ENCODE measurements at regions of chr3 and their contacts with region 1.

Region 1: DNA sequence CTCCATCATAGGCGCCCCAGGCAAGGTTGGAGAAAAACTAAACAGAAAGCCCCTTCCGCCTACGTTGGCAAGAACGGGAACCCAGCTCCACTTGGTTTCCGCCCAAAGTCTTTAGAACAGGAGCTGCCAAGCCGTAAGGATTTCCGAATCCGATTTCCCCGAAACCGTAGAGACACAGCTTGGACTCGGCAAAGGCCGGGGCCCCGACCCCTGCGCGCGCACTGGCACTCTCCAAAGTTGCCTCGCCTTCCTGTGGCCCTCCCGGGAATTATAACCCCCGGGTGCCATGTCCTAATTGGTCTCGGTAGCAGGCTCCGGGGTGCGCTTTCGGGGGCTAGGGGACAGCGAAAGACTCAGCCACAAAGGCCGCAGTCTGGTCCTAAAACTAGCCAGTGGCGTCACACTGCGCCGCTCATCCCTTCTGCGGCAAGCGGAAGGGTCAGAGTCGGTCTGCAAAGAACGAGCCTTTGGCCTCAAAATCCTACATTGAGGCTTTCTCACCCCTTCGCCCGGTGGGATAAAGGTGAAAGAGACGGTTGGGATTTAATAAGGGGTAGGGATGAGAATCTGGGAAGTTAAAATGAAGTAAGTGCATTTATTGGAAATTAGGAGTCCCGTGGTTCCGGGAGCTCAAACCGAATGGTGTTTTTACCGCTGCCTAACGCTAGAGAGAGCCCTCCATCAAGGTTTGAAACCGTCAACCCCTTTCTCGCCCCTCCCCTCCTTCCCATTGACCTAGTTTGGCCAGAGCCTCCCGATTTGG is 6.8 kb downstream of the BCL6 start:
- DNase-seq: peak; percentile 66 to 79 (median 79)
- H3K4me3 ChIP-seq: peak overlapping the region; percentile 68 to 96 (median 77)
- H3K4me3 Mint-ChIP-seq: peak overlapping the region; percentile 95 to 100
- H3K27ac ChIP-seq: peak overlapping the region; percentile 96 to 99
- H3K27ac Mint-ChIP-seq: peak overlapping the region; percentile 99 to 100 (median 100)
- H3K4me1 ChIP-seq: peaks cover 47 to 75% of the 10 kb centered on the region in 2 donors
- H3K4me1 Mint-ChIP-seq: peaks cover 45% of the 10 kb centered on the region
- H3K27me3 ChIP-seq: no peaks in the 10 kb centered on the region
- H3K27me3 Mint-ChIP-seq: peaks cover 0 to 9% (median 3%) of the 10 kb centered on the region in 3 donors
- CTCF ChIP-seq: peak; percentile 77

Region 2: GRCh38 chr3:187679638-187680396 is 58.7 kb before region 1 on chr3:
- intact Hi-C with region 1: no loop called
- DNase-seq: peak; percentile 36 to 57 (median 52)
- H3K4me3 ChIP-seq: no peak overlapping the region
- H3K4me3 Mint-ChIP-seq: no peak overlapping the region
- H3K27ac ChIP-seq: no peak overlapping the region
- H3K27ac Mint-ChIP-seq: no peak overlapping the region
- H3K4me1 ChIP-seq: no peaks in the 10 kb centered on the region
- H3K4me1 Mint-ChIP-seq: peaks cover 2% of the 10 kb centered on the region
- H3K27me3 ChIP-seq: peaks cover 0 to 9% of the 10 kb centered on the region in 2 donors
- H3K27me3 Mint-ChIP-seq: peaks cover 2 to 18% (median 11%) of the 10 kb centered on the region in 3 donors
- CTCF ChIP-seq: peak; percentile 94

Region 3: GRCh38 chr3:187689984-187690383 is 48.5 kb before region 1 on chr3:
- intact Hi-C with region 1: no loop called
- DNase-seq: no peak
- H3K4me3 ChIP-seq: no peak overlapping the region
- H3K4me3 Mint-ChIP-seq: no peak overlapping the region
- H3K27ac ChIP-seq: no peak overlapping the region
- H3K27ac Mint-ChIP-seq: no peak overlapping the region
- H3K4me1 ChIP-seq: no peaks in the 10 kb centered on the region
- H3K4me1 Mint-ChIP-seq: peaks cover 2% of the 10 kb centered on the region
- H3K27me3 ChIP-seq: peaks cover 2 to 7% of the 10 kb centered on the region in 2 donors
- H3K27me3 Mint-ChIP-seq: peaks cover 10 to 16% (median 14%) of the 10 kb centered on the region in 3 donors
- CTCF ChIP-seq: no peak

Region 4: DNA sequence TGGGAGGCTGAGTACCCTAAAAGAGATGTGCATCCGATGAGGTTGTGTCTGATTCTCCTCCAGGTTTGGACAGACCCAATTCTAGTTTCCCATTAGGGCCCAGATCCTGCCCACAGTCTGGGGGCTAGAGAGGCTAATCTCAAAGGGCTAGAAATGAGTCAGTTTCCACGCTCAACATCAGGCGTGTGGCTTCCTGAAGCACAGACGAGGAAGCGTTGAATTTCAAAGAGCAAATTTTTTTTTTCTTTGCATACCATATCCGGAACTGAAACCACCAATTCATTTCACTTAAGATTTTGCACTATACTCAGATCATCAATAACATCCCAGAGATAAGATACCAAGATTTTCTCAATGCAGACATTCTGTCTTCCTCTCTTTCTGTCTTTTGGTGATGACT is 180.5 kb after region 1 on chr3:
- intact Hi-C with region 1: loop called in 1 of 2 experiments (anchors 5 kb)
- DNase-seq: peak; percentile 73 to 91 (median 86)
- H3K4me3 ChIP-seq: peak overlapping the region in 2 of 3 experiments; percentile 25 to 69
- H3K4me3 Mint-ChIP-seq: peak overlapping the region; percentile 63 to 75
- H3K27ac ChIP-seq: peak overlapping the region; percentile 30 to 94
- H3K27ac Mint-ChIP-seq: peak overlapping the region; percentile 94 to 98 (median 95)
- H3K4me1 ChIP-seq: peaks cover 66 to 71% of the 10 kb centered on the region in 2 donors
- H3K4me1 Mint-ChIP-seq: peaks cover 73% of the 10 kb centered on the region
- H3K27me3 ChIP-seq: no peaks in the 10 kb centered on the region
- H3K27me3 Mint-ChIP-seq: no peaks in the 10 kb centered on the region
- CTCF ChIP-seq: no peak

Region 5: GRCh38 chr3:188185717-188186251 is 447.3 kb after region 1 on chr3:
- intact Hi-C with region 1: loop called in 1 of 2 experiments (anchors 2 kb)
- DNase-seq: peak in 2 of 3 donors; percentile 43 to 48
- H3K4me3 ChIP-seq: no peak overlapping the region
- H3K4me3 Mint-ChIP-seq: peak overlapping the region in 1 of 2 donors; percentile 16
- H3K27ac ChIP-seq: no peak overlapping the region
- H3K27ac Mint-ChIP-seq: peak overlapping the region; percentile 59 to 92 (median 83)
- H3K4me1 ChIP-seq: peaks cover 20 to 29% of the 10 kb centered on the region in 2 donors
- H3K4me1 Mint-ChIP-seq: peaks cover 26% of the 10 kb centered on the region
- H3K27me3 ChIP-seq: no peaks in the 10 kb centered on the region
- H3K27me3 Mint-ChIP-seq: peaks cover 1 to 7% (median 3%) of the 10 kb centered on the region in 3 donors
- CTCF ChIP-seq: no peak

Region 6: DNA sequence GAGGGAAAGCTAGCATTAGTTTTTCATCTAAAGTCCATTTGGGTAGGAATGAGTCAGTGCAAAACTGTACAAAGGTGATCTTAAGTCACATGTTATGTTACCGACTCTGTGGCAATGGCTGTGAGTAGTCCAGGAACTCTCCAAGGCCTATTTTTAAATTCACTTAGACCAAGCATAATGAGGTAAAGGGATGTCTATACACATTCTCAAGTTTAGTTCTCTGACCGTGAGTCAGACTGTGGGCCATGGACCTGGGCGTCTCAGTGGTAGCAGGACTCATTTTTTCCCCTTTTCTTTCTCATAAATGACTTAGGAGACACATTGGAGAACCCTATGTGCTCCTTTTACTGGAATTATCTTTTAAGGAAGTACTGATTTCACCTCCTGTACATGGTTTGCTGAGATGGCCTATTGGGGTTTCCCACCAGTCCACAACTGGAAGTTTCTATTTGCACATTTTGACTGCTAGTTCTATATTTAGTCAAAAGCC is 944.6 kb after region 1 on chr3:
- intact Hi-C with region 1: loop called in 1 of 2 experiments (anchors 2 kb)
- DNase-seq: peak; percentile 14 to 70 (median 49)
- H3K4me3 ChIP-seq: no peak overlapping the region
- H3K4me3 Mint-ChIP-seq: no peak overlapping the region
- H3K27ac ChIP-seq: peak overlapping the region in 1 of 2 donors; percentile 23
- H3K27ac Mint-ChIP-seq: peak overlapping the region in 3 of 7 donors; percentile 6 to 82 (median 62)
- H3K4me1 ChIP-seq: peaks cover 38 to 58% of the 10 kb centered on the region in 2 donors
- H3K4me1 Mint-ChIP-seq: peaks cover 50% of the 10 kb centered on the region
- H3K27me3 ChIP-seq: no peaks in the 10 kb centered on the region
- H3K27me3 Mint-ChIP-seq: peaks cover 0 to 3% (median 0%) of the 10 kb centered on the region in 3 donors
- CTCF ChIP-seq: no peak

Region 7: GRCh38 chr3:188842639-188843038 is 1104.1 kb after region 1 on chr3:
- intact Hi-C with region 1: loop called in 1 of 2 experiments (anchors 5 kb)
- DNase-seq: peak; percentile 75 to 93 (median 84)
- H3K4me3 ChIP-seq: peak overlapping the region in 1 of 3 experiments; percentile 21
- H3K4me3 Mint-ChIP-seq: peak overlapping the region in 1 of 2 donors; percentile 46
- H3K27ac ChIP-seq: peak overlapping the region; percentile 52 to 80
- H3K27ac Mint-ChIP-seq: peak overlapping the region; percentile 85 to 98 (median 94)
- H3K4me1 ChIP-seq: peaks cover 42 to 59% of the 10 kb centered on the region in 2 donors
- H3K4me1 Mint-ChIP-seq: peaks cover 50% of the 10 kb centered on the region
- H3K27me3 ChIP-seq: no peaks in the 10 kb centered on the region
- H3K27me3 Mint-ChIP-seq: peaks cover 0 to 1% (median 0%) of the 10 kb centered on the region in 3 donors
- CTCF ChIP-seq: no peak

Region 8: DNA sequence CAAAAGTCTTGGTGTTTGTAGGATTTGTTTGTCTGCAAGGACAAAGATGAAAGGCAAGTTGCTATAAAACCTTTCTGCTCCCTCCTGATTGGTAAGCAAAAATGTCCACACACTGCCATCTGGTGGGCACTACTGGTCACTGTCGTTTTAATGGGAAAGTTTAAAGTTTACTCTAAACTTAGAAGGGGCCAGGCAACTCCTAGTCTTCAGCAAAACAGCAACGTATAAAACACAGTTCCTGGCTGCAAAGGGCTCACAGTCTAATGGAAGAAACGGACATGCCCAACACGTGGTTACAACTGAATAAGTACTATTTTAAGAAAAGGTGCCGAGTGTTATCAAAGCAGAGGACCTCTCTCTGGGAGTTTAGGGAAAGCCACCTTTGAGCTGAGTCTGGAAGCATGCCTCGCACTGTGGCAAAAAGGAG is 1409.6 kb after region 1 on chr3:
- intact Hi-C with region 1: loop called (anchors 5 kb)
- DNase-seq: peak; percentile 46 to 67 (median 57)
- H3K4me3 ChIP-seq: no peak overlapping the region
- H3K4me3 Mint-ChIP-seq: no peak overlapping the region
- H3K27ac ChIP-seq: no peak overlapping the region
- H3K27ac Mint-ChIP-seq: no peak overlapping the region
- H3K4me1 ChIP-seq: peaks cover 16 to 21% of the 10 kb centered on the region in 2 donors
- H3K4me1 Mint-ChIP-seq: peaks cover 25% of the 10 kb centered on the region
- H3K27me3 ChIP-seq: no peaks in the 10 kb centered on the region
- H3K27me3 Mint-ChIP-seq: peaks cover 3 to 6% (median 5%) of the 10 kb centered on the region in 3 donors
- CTCF ChIP-seq: peak; percentile 79

Measured in CD14-positive monocyte (primary cell).